ENCODE measurements at regions of chr6 and their contacts with region 1.

Region 1: GRCh38 chr6:31958741-31959739 is at the starts of genes NELFE and SKIC2:
- DNase-seq: peak; percentile 99 to 100 (median 100)
- ATAC-seq: peak; percentile 100
- H3K4me3 ChIP-seq: peak within 1 kb of the TSS; percentile 97
- H3K27ac ChIP-seq: peak within 1 kb of the TSS; percentile 87
- H3K4me1 ChIP-seq: peaks cover 4 to 17% of the 10 kb centered on the region in 2 experiments; a peak in 4 of 5 replicates
- H3K27me3 ChIP-seq: no peaks in the 10 kb centered on the region
- CTCF ChIP-seq: no peak
- EP300 ChIP-seq: no peak
- POLR2A ChIP-seq: peak; percentile 73
- RAD21 ChIP-seq: peak; percentile 24 to 28
- polyA plus RNA-seq, gene NELFE: 15.2 to 18.1 TPM
- polyA plus RNA-seq, gene SKIC2: 3.3 to 7.8 TPM

Region 2: GRCh38 chr6:31882344-31882743 is 76.7 kb before region 1 on chr6:
- CTCF ChIA-PET with region 1: no interaction called
- POLR2A ChIA-PET with region 1: no interaction called
- in situ Hi-C with region 1: no loop called
- intact Hi-C with region 1: no loop called
- DNase-seq: peak in 1 of 4 experiments; percentile 35
- ATAC-seq: no peak
- H3K4me3 ChIP-seq: no peak overlapping the region
- H3K27ac ChIP-seq: no peak overlapping the region
- H3K4me1 ChIP-seq: peaks cover 0 to 41% of the 10 kb centered on the region in 2 experiments; a peak in 2 of 5 replicates
- H3K27me3 ChIP-seq: no peaks in the 10 kb centered on the region
- CTCF ChIP-seq: no peak
- EP300 ChIP-seq: no peak
- POLR2A ChIP-seq: no peak
- RAD21 ChIP-seq: no peak

Region 3: GRCh38 chr6:31901953-31902643 is 56.9 kb before region 1 on chr6 and contains the start of gene ZBTB12:
- CTCF ChIA-PET with region 1: no interaction called
- POLR2A ChIA-PET with region 1: interaction called, 3 read pairs
- in situ Hi-C with region 1: no loop called
- intact Hi-C with region 1: loop called (anchors 2 kb)
- DNase-seq: peak; percentile 98
- ATAC-seq: peak; percentile 84
- H3K4me3 ChIP-seq: peak within 1 kb of the TSS; percentile 75
- H3K27ac ChIP-seq: peak within 1 kb of the TSS; percentile 84
- H3K4me1 ChIP-seq: peaks cover 31 to 36% of the 10 kb centered on the region in 2 experiments; a peak in 4 of 5 replicates
- H3K27me3 ChIP-seq: no peaks in the 10 kb centered on the region
- CTCF ChIP-seq: peak in 1 of 3 experiments; percentile 15; a peak in 1 of 6 replicates
- EP300 ChIP-seq: no peak
- POLR2A ChIP-seq: peak; percentile 72
- RAD21 ChIP-seq: peak; percentile 41 to 50
- polyA plus RNA-seq, gene ZBTB12: 0.03 TPM in 1 of 2 experiments, not detected in the other

Region 4: DNA sequence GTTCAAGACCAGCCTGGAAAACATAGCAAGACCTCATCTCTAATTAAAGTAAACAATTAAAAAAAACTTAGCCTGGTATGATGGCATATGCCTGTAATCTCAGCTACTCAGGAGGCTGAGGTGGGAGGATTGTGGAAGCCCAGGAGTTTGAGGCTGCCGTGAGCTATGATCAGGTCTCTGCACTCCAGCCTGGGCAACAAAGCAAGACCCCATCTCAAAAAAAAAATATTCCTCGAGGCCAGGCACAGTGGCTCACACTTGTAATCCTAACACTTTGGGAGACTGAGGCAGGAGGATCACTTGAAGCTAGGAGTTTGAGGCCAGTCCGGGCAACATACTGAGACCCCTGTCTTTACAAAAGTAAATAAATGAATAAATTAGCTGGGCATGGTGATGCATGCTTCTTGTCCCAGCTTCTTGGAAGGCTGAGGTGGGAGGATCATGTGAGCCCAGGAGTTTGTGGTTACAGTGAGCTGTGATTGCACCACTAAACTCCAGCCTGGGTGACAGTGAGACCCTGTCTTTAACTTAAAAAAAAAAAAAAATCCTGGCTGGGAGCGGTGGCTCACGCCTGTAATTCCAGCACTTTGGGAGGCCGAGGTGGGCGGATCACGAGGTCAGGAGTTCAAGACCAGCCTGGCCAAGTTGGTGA is 40.8 kb before region 1 on chr6:
- CTCF ChIA-PET with region 1: no interaction called
- POLR2A ChIA-PET with region 1: no interaction called
- in situ Hi-C with region 1: no loop called
- intact Hi-C with region 1: loop called (anchors 5 kb)
- DNase-seq: no peak
- ATAC-seq: no peak
- H3K4me3 ChIP-seq: no peak overlapping the region
- H3K27ac ChIP-seq: no peak overlapping the region
- H3K4me1 ChIP-seq: peaks cover 0 to 3% of the 10 kb centered on the region in 2 experiments; a peak in 1 of 5 replicates
- H3K27me3 ChIP-seq: no peaks in the 10 kb centered on the region
- CTCF ChIP-seq: no peak
- EP300 ChIP-seq: no peak
- POLR2A ChIP-seq: no peak
- RAD21 ChIP-seq: no peak

Region 5: DNA sequence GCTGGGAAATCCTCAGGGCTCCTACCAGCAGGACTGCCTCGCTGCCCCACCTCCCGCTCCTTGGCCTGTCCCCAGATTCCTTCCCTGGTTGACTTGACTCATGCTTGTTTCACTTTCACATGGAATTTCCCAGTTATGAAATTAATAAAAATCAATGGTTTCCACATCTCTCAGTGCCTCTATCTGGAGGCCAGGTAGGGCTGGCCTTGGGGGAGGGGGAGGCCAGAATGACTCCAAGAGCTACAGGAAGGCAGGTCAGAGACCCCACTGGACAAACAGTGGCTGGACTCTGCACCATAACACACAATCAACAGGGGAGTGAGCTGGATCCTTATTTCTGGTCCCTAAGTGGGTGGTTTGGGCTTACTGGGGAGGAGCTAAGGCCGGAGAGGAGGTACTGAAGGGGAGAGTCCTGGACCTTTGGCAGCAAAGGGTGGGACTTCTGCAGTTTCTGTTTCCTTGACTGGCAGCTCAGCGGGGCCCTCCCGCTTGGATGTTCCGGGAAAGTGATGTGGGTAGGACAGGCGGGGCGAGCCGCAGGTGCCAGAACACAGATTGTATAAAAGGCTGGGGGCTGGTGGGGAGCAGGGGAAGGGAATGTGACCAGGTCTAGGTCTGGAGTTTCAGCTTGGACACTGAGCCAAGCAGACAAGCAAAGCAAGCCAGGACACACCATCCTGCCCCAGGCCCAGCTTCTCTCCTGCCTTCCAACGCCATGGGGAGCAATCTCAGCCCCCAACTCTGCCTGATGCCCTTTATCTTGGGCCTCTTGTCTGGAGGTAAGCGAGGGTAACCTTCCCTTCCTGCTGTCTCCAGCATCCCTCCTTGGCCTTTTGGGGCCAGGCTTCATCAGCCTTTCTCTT is 13.3 kb before region 1 on chr6 and contains the start of gene CFB:
- CTCF ChIA-PET with region 1: no interaction called
- POLR2A ChIA-PET with region 1: interaction called, 16 read pairs
- in situ Hi-C with region 1: no loop called
- intact Hi-C with region 1: no loop called
- DNase-seq: peak in 1 of 4 experiments; percentile 8
- ATAC-seq: no peak
- H3K4me3 ChIP-seq: no peak within 1 kb of the TSS
- H3K27ac ChIP-seq: no peak within 1 kb of the TSS
- H3K4me1 ChIP-seq: peaks cover 18 to 26% of the 10 kb centered on the region in 2 experiments
- H3K27me3 ChIP-seq: peaks cover 2 to 26% of the 10 kb centered on the region in 2 experiments; a peak in 3 of 5 replicates
- CTCF ChIP-seq: no peak
- EP300 ChIP-seq: no peak
- POLR2A ChIP-seq: no peak
- RAD21 ChIP-seq: no peak
- polyA plus RNA-seq, gene CFB: 0.08 to 0.38 TPM

Region 6: DNA sequence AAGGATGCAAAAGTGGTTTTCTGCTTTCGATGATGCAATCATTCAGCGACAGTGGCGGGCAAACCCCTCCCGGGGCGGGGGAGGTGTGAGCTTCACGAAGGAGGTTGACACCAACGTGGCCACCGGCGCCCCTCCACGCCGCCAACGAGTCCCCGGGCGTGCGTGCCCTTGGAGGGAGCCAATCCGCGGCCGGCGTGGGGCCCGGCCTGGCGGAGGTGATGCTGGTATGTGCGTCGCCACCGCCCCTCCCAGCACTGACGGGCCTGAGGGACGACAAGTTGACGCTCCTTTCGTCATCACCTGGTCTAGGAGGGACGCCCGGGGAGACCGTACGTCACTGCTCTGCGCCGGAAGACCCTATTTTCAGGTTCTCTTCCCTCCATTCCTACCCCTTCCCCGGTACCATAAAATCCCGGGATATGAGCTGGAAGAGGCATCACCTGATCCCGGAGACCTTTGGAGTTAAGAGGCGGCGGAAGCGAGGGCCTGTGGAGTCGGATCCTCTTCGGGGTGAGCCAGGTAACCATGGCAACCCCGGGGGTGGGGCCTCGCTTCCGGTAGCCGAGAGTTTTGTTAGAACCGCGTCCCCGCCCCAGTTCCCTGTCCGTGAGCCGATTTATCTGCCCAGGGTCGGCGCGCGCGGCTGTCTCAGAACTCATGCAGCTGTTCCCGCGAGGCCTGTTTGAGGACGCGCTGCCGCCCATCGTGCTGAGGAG is 13.1 kb after region 1 on chr6 and contains the start of gene DXO:
- CTCF ChIA-PET with region 1: no interaction called
- POLR2A ChIA-PET with region 1: interaction called, 74 read pairs
- in situ Hi-C with region 1: no loop called
- intact Hi-C with region 1: loop called (anchors 1 kb)
- DNase-seq: peak; percentile 98 to 99 (median 98)
- ATAC-seq: peak; percentile 84
- H3K4me3 ChIP-seq: peak within 1 kb of the TSS; percentile 56
- H3K27ac ChIP-seq: peak within 1 kb of the TSS; percentile 84
- H3K4me1 ChIP-seq: peaks cover 56 to 65% of the 10 kb centered on the region in 2 experiments; a peak in 4 of 5 replicates
- H3K27me3 ChIP-seq: no peaks in the 10 kb centered on the region
- CTCF ChIP-seq: peak in 1 of 3 experiments; percentile 0; a peak in 1 of 6 replicates
- EP300 ChIP-seq: peak; percentile 62
- POLR2A ChIP-seq: peak; percentile 82
- RAD21 ChIP-seq: no peak; a peak in 2 of 4 replicates
- polyA plus RNA-seq, gene DXO: 6.4 to 7.3 TPM

Region 7: DNA sequence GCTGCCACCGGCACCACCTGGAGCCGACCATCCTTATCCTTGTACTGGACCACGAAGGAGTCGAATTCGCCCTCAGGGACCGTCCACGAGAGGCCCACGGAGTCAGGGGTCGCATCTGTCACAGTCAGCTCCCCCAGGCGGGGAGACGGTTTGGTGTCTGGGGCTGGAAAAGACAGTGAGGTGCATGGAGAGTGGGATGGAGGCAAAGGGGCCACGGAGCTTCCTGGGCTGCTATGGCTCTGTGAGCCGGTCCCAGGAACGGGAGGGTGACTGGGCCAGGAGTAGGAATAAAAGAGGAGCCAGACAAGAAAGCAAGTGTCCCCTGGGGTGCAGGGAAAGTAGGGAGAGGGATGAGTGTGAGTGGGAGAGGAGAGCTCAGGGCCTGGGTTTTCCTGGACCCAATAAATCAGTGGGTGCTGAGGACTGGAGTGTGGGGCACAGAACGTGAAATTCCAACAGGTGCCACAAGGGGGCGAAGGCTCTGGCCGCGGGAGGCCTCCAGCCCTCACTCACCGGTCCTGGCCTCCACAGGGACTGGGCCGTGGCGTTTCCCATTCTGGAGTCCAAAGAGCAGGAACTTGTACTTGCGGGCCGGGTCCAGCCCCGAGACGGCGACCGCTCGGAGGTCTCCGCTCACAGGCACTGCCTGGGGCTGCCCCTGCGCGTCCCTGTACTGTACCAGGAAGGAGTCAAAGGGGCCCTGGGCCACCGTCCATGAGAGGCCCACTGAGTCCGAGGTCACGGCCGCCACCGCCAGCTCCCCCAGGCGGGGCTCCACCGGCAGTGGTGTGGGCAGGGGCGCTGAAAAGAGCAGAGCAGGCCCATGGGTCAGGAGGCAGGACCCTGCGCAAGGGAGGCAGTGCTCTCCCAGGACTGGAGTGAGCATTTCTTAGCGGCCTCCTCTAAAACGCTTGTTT is 89.1 kb after region 1 on chr6:
- CTCF ChIA-PET with region 1: no interaction called
- POLR2A ChIA-PET with region 1: no interaction called
- in situ Hi-C with region 1: loop called (anchors 10 kb)
- intact Hi-C with region 1: no loop called
- DNase-seq: peak; percentile 80 to 90 (median 86)
- ATAC-seq: peak; percentile 80
- H3K4me3 ChIP-seq: no peak overlapping the region
- H3K27ac ChIP-seq: peak overlapping the region; percentile 54; the same call in 1 of the 3 replicates
- H3K4me1 ChIP-seq: peaks cover 31 to 55% of the 10 kb centered on the region in 2 experiments
- H3K27me3 ChIP-seq: no peaks in the 10 kb centered on the region
- CTCF ChIP-seq: peak; percentile 91 to 97 (median 91)
- EP300 ChIP-seq: no peak
- POLR2A ChIP-seq: 0 out of 2 replicates have a peak, but pooled peaks have one; percentile 32
- RAD21 ChIP-seq: peak; percentile 53 to 77

Measured in K562 (cell line).